CD8-positive, alpha-beta T cell (primary cell): ENCODE measurements at regions of chr2 and their contacts with region 1.

Region 1: GRCh38 chr2:100562732-100563720 is at the start of gene PDCL3:
- DNase-seq: peak; percentile 88 to 98 (median 94)
- ATAC-seq: peak; percentile 88
- H3K4me3 ChIP-seq: peak within 1 kb of the TSS; percentile 69 to 89
- H3K4me3 Mint-ChIP-seq: peak within 1 kb of the TSS; percentile 97
- H3K27ac ChIP-seq: peak within 1 kb of the TSS; percentile 84 to 87
- H3K27ac Mint-ChIP-seq: peak within 1 kb of the TSS; percentile 99
- H3K4me1 ChIP-seq: peaks cover 18% of the 10 kb centered on the region
- H3K4me1 Mint-ChIP-seq: peaks cover 39% of the 10 kb centered on the region
- H3K27me3 ChIP-seq: no peaks in the 10 kb centered on the region
- H3K27me3 Mint-ChIP-seq: no peaks in the 10 kb centered on the region
- CTCF ChIP-seq: no peak
- total RNA-seq, gene PDCL3: 32.4 to 33.5 TPM

Region 2: DNA sequence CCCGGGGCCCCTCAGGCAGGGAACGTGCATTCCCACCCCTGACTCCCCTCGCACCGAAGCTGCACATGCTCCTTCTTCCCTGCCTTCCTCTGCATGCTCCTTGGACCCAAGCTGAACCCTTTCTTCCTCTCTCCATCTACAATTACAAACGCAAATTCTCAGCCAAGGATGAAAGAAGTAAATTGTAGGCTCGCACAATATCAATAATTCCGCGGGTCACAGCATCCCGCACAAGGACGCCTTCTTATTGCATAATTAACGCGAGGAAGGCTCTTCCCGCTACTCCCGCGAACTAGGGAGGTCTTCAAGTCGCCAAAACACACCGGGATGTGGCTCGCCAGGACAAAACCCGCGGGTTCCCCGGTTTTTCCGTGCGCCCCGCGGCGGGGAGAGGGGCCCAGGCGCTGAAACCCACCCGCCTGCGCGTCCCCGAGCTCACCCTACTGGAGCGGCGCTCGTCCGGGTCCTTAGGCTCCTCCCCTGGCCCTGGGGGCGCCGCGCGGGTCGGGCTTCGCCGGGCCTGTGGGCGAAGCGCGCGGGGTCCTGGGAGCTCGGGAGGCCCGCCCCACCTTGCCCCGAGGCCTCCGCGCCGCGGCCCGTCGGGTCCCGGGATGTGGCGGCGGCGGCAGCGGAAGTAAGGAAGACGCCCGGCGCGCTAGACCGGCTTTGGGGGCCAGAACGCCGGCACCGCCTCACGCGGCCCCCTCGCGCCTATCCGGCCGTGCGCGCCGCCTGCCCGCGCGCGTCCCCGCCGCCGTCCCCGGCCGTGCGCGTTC is 145.9 kb before region 1 on chr2 and contains the start of gene CHST10:
- CTCF ChIA-PET with region 1: no interaction called
- POLR2A ChIA-PET with region 1: interaction called, 8 read pairs
- intact Hi-C with region 1: loop called (anchors 1 to 5 kb)
- DNase-seq: peak; percentile 18 to 76 (median 48)
- ATAC-seq: peak; percentile 92
- H3K4me3 ChIP-seq: peak within 1 kb of the TSS; percentile 78 to 93
- H3K4me3 Mint-ChIP-seq: peak within 1 kb of the TSS; percentile 85
- H3K27ac ChIP-seq: peak within 1 kb of the TSS; percentile 37 to 44
- H3K27ac Mint-ChIP-seq: peak within 1 kb of the TSS; percentile 30
- H3K4me1 ChIP-seq: peaks cover 8% of the 10 kb centered on the region
- H3K4me1 Mint-ChIP-seq: peaks cover 32% of the 10 kb centered on the region
- H3K27me3 ChIP-seq: no peaks in the 10 kb centered on the region
- H3K27me3 Mint-ChIP-seq: no peaks in the 10 kb centered on the region
- CTCF ChIP-seq: no peak
- total RNA-seq, gene CHST10: 6.0 to 7.6 TPM

Region 3: DNA sequence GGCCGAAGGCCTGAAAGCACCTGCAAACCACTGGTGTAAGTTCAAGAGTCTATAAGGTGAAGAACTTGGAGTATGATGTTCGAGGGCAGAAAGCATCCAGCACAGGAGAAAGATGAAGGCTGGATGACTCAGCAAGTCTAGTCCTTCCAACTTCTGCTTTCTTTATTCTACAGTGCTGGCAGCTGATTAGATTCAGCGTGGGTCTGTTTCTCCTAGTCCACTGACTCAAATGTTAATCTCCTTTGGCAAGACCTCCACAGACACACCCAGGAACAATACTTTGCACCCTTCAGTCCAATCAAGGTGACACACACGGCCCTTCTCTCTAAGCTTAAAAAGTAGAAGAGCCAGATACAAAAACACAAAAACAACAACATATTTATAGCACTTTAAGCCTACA is 49.4 kb before region 1 on chr2:
- CTCF ChIA-PET with region 1: no interaction called
- POLR2A ChIA-PET with region 1: no interaction called
- intact Hi-C with region 1: no loop called
- DNase-seq: no peak
- ATAC-seq: no peak
- H3K4me3 ChIP-seq: no peak overlapping the region
- H3K4me3 Mint-ChIP-seq: no peak overlapping the region
- H3K27ac ChIP-seq: no peak overlapping the region
- H3K27ac Mint-ChIP-seq: no peak overlapping the region
- H3K4me1 ChIP-seq: no peaks in the 10 kb centered on the region
- H3K4me1 Mint-ChIP-seq: no peaks in the 10 kb centered on the region
- H3K27me3 ChIP-seq: no peaks in the 10 kb centered on the region
- H3K27me3 Mint-ChIP-seq: peaks cover 2% of the 10 kb centered on the region
- CTCF ChIP-seq: no peak

Region 4: DNA sequence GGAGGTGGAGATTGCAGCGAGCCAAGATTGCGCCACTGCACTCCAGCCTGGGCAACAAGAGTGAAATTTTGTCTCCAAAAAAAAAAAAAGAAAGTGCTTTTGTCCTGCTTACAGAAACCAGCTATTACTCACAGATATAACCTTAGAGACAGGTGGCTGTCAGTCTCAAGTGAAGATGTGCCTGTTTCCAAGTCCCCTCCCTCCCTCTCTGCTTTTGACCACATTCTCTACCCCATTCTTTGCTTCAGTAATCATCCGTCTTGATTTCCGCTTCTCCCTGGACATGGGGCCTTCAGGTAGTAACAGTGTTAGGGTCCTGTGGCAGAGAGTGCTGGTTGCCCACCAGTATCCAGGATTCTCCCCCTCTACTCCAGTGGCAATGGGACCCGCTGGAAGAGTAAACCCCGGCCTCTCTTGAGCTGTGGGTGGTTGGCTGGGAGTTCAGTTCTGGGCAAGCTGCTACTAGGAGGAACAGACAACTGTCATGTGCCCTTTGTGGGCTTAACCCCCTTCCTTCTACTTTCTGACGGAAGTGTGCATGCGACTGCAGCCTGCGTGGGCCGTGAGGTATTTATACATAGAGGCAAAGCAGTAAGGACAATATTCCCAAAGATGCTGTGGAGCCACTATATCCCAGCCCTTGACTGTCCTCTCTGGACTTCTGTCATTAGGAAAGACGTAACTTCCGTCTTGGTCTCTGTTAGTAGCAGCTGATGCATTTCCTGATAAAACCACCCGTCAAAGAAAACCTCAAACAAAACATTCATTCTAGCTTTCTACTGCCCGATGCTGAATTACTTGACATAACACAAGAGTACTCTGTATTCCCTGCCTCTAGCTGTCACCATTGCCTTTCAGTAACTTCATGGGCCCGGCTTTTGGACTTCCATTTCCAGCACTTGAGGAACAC is 17.6 kb after region 1 on chr2:
- CTCF ChIA-PET with region 1: interaction called, 18 read pairs
- POLR2A ChIA-PET with region 1: interaction called, 57 read pairs
- intact Hi-C with region 1: loop called (anchors 1 kb)
- DNase-seq: peak; percentile 37 to 91 (median 65)
- ATAC-seq: peak; percentile 77
- H3K4me3 ChIP-seq: peak overlapping the region; percentile 27 to 34
- H3K4me3 Mint-ChIP-seq: peak overlapping the region; percentile 68
- H3K27ac ChIP-seq: peak overlapping the region; percentile 75 to 87
- H3K27ac Mint-ChIP-seq: peak overlapping the region; percentile 99
- H3K4me1 ChIP-seq: peaks cover 35% of the 10 kb centered on the region
- H3K4me1 Mint-ChIP-seq: peaks cover 39% of the 10 kb centered on the region
- H3K27me3 ChIP-seq: no peaks in the 10 kb centered on the region
- H3K27me3 Mint-ChIP-seq: no peaks in the 10 kb centered on the region
- CTCF ChIP-seq: no peak

Region 5: DNA sequence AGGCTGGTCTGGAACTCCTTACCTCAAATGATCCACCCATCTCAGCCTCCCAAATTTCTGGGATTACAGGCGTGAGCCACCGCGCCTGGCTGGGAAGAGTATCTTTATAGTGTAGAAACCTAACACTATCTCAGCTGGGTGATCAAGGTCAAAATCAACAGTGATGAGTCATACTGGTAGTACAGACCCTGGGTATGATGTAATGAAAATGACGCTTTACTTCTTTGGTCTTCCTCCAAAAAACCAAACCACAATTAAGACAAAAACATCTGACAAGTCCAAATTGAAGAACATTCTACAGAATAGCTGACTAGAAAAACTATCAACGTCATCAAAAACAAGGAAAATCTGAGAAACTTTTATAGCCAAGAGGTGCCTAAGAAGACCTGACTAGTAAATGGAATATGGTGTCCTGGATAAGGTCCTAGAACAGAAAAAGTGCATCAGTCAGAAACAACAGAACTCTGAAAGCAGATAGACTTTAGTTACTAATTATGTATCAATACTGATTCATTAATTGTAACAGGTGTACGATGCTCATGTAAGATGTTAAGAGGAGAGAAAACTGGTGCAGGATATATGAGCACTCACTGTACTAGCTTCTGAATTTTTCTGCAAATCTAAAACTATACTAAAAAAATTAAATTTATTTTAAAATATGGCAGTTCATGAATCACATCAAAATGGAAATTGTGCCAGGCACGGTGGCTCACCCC is 25.2 kb after region 1 on chr2:
- CTCF ChIA-PET with region 1: interaction called, 4 read pairs
- POLR2A ChIA-PET with region 1: interaction called, 13 read pairs
- intact Hi-C with region 1: loop called in 1 of 2 experiments (anchors 2 kb)
- DNase-seq: peak in 5 of 9 experiments; percentile 18 to 89 (median 34)
- ATAC-seq: peak; percentile 88
- H3K4me3 ChIP-seq: no peak overlapping the region
- H3K4me3 Mint-ChIP-seq: no peak overlapping the region
- H3K27ac ChIP-seq: no peak overlapping the region
- H3K27ac Mint-ChIP-seq: peak overlapping the region; percentile 78
- H3K4me1 ChIP-seq: peaks cover 10% of the 10 kb centered on the region
- H3K4me1 Mint-ChIP-seq: peaks cover 20% of the 10 kb centered on the region
- H3K27me3 ChIP-seq: no peaks in the 10 kb centered on the region
- H3K27me3 Mint-ChIP-seq: no peaks in the 10 kb centered on the region
- CTCF ChIP-seq: no peak

Region 6: DNA sequence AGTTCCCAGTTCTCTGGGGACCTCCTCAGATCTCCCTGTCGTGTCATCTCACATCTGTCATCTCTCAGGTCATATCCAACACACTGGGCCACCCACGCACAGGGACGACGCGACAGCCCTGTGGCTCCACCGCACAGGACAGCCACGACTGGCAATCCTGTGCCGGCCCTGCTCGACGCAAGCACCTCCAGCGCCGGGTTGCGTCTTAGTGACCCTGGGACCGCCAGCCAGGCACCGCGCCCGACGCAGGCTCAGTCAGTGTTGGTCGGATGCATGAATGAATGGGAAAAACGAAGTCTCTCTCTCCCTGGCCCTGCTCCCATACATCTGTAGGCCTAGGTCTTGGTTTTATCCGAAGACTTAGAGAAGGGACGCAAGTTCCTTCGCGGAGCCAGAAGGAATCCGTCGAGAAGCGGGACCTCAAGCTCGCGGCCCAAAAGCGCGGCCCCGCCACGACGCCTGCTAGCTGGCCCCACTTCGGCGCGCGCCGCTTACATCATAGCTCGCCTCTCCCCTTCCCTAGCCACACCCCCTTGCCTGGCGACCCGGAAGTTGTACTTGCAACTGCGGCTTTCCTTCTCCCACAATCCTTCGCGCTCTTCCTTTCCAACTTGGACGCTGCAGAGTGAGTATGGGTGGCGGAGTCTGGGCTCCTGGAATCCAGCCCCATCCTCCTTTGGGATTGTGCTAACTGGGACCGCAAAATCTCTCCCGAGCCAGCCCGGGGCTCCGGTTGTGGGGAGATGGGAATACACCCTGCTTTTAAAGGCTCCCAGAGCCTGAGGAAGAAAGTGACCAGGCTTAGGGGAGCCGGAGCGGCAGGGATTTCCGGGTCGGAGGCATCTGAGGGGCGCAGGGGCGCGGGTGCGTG is 438.9 kb after region 1 on chr2 and contains the start of gene RPL31:
- CTCF ChIA-PET with region 1: interaction called, 3 read pairs
- POLR2A ChIA-PET with region 1: interaction called, 17 read pairs
- intact Hi-C with region 1: loop called (anchors 1 kb)
- DNase-seq: peak; percentile 90 to 98 (median 95)
- ATAC-seq: peak; percentile 97
- H3K4me3 ChIP-seq: peak within 1 kb of the TSS; percentile 92 to 95
- H3K4me3 Mint-ChIP-seq: peak within 1 kb of the TSS; percentile 95
- H3K27ac ChIP-seq: peak within 1 kb of the TSS; percentile 81 to 90
- H3K27ac Mint-ChIP-seq: peak within 1 kb of the TSS; percentile 98
- H3K4me1 ChIP-seq: peaks cover 27% of the 10 kb centered on the region
- H3K4me1 Mint-ChIP-seq: peaks cover 51% of the 10 kb centered on the region
- H3K27me3 ChIP-seq: no peaks in the 10 kb centered on the region
- H3K27me3 Mint-ChIP-seq: no peaks in the 10 kb centered on the region
- CTCF ChIP-seq: no peak
- total RNA-seq, gene RPL31: 2,776 to 2,895 TPM